ENCODE measurements at regions of chr3 and their contacts with region 1.

Region 1: DNA sequence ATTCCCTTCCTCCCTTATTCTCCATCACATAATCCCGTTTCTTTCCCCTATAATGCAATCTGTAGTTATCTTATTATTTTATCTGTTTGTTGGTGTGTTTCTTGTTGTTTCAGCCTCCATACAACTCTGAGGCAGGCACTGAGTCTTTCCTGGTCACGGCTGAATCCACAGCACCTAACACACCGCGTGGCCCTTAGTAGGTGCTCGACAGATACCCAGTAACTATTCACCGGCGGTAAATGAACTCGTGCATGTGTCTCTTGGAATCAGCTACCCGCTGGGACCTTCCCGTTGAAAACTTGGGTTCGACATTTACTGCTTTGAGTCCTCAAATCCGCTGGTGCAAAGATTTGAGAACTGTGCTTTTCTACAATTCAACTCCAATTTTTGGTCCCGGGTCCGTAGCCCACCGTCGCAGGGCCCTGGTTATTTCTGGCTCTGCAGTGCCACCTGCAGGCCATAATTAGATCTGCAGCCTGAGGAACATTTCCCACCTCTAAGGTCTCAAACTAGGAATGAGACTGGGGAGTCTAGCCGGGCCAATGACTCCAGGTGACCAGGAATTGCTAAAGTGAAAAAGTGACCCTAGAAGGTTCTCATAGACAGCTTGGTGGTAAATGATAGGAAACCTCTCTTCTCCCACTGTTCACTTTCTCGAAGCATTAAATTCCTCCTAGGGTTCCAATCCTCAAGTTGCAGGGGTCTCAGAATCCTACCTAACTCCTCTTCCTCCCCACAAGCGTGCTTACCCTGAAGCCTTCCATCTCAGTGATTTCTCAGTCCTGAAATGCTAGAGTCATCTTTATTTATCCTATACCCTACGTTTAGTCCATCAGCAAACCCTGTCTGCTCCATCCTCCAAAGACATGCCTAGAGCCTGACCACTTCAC is 40.0 kb upstream of the TRH start:
- DNase-seq: peak in 37 of 42 donors; percentile 11 to 79 (median 48)

Region 2: GRCh38 chr3:129650256-129650872 is 284.1 kb before region 1 on chr3:
- intact Hi-C with region 1: loop called (anchors 5 kb)
- DNase-seq: peak; percentile 49 to 91 (median 80)

Region 3: DNA sequence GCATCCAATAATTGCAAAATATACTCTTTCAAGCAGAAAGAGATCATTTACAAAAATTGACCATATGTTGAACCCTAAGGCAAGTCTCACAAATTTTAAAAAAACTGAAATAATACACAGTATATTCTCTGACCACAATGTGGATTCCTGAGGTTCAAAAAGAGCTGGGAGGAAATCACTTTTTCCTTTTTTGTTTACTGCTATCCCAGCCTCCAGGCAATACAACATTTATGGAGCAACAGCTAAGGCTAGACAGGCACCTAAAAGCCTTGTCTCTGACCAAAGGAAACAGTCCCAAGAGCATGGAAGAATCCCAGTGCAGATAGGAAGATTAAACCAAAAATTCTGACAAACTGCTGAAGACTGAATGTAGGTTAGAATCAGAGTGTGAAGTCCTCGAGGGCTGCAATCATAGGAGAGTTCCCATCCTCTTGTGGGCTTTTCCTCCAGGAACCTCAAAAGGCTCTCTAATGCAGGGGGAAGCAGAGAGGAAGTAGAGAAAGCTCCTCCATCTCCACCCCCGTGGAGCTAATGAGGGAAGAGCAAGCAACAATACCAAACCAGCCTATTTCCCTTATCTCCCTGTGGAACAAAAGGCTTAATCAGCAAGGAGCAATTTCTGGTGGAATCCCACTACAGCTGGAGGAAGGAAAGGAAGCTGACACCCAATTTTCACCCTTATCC is 98.0 kb before region 1 on chr3:
- intact Hi-C with region 1: no loop called
- DNase-seq: no peak

Region 4: GRCh38 chr3:129878372-129878771 is 56.1 kb before region 1 on chr3:
- intact Hi-C with region 1: no loop called
- DNase-seq: no peak

Region 5: GRCh38 chr3:129992781-129993180 is 58.3 kb after region 1 on chr3:
- intact Hi-C with region 1: no loop called
- DNase-seq: no peak